Activated naive CD4-positive, alpha-beta T cell treated with anti-CD3 and anti-CD28 coated beads for 36 hours (primary cell): ENCODE measurements at regions of chr12 and their contacts with region 1.

Region 1: GRCh38 chr12:131928711-131929580 is at the start of gene PUS1:
- DNase-seq: peak; percentile 95
- H3K4me3 Mint-ChIP-seq: peak within 1 kb of the TSS; percentile 96
- H3K27ac Mint-ChIP-seq: peak within 1 kb of the TSS; percentile 80
- H3K4me1 Mint-ChIP-seq: peaks cover 30% of the 10 kb centered on the region
- H3K27me3 Mint-ChIP-seq: no peaks in the 10 kb centered on the region
- total RNA-seq, gene PUS1: 37.7 to 38.8 TPM

Region 2: GRCh38 chr12:131710464-131711457 is 218.2 kb before region 1 on chr12 and contains the start of gene SFSWAP:
- CTCF ChIA-PET with region 1: no interaction called
- intact Hi-C with region 1: loop called (anchors 1 kb)
- DNase-seq: peak; percentile 79
- H3K4me3 Mint-ChIP-seq: peak within 1 kb of the TSS; percentile 89
- H3K27ac Mint-ChIP-seq: peak within 1 kb of the TSS; percentile 96
- H3K4me1 Mint-ChIP-seq: peaks cover 23% of the 10 kb centered on the region
- H3K27me3 Mint-ChIP-seq: no peaks in the 10 kb centered on the region
- total RNA-seq, gene SFSWAP: 51.3 TPM

Region 3: DNA sequence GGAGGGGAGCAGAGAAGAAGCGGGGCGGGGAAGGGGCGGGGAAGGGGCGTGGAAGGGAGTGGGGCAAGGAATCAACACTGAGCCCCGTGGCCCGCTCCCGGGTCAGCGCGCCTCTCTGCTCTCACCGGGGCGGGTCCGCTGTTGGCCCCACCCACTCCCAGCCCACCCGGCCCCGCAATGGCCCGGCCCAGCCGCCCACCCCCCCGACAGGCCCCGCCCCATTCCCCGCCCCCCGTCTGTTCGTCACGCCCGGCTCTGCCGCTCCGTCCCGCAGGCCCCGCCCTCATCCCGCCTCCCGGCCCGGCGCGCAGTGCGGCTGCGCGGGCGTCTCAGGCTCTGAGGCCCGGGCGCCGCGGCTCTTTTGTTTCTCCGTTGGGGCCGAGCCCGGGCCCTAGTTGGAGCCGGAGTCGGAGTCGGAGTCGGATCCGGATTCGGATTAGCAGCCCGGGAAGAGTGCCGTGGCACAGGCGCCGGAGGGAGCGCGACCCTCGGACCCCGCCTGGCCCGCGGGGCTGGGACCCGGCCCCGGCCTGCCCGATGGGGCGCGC is 34.6 kb before region 1 on chr12 and contains the start of gene ULK1:
- CTCF ChIA-PET with region 1: no interaction called
- intact Hi-C with region 1: loop called (anchors 1 kb)
- DNase-seq: peak; percentile 91
- H3K4me3 Mint-ChIP-seq: peak within 1 kb of the TSS; percentile 79
- H3K27ac Mint-ChIP-seq: no peak within 1 kb of the TSS
- H3K4me1 Mint-ChIP-seq: peaks cover 15% of the 10 kb centered on the region
- H3K27me3 Mint-ChIP-seq: no peaks in the 10 kb centered on the region
- total RNA-seq, gene ULK1: 13.6 to 15.6 TPM